ENCODE measurements at regions of chr17 and their contacts with region 1.

Region 1: GRCh38 chr17:57987580-57988421 is at the start of gene VEZF1:
- DNase-seq: peak; percentile 68
- H3K4me3 ChIP-seq: peak within 1 kb of the TSS; percentile 75 to 88 (median 86)
- H3K27ac ChIP-seq: peak within 1 kb of the TSS; percentile 80
- H3K4me1 ChIP-seq: peaks cover 27% of the 10 kb centered on the region
- H3K27me3 ChIP-seq: no peaks in the 10 kb centered on the region
- CTCF ChIP-seq: no peak
- total RNA-seq, gene VEZF1: 20.5 to 34.7 TPM

Region 2: GRCh38 chr17:57875309-57876115 is 112.3 kb before region 1 on chr17:
- CTCF ChIA-PET with region 1: no interaction called
- dilution Hi-C with region 1: no loop called
- in situ Hi-C with region 1: no loop called
- intact Hi-C with region 1: loop called (anchors 1 kb)
- DNase-seq: peak; percentile 91
- H3K4me3 ChIP-seq: no peak overlapping the region
- H3K27ac ChIP-seq: peak overlapping the region; percentile 61
- H3K4me1 ChIP-seq: peaks cover 70% of the 10 kb centered on the region
- H3K27me3 ChIP-seq: no peaks in the 10 kb centered on the region
- CTCF ChIP-seq: peak; percentile 57 to 58

Region 3: DNA sequence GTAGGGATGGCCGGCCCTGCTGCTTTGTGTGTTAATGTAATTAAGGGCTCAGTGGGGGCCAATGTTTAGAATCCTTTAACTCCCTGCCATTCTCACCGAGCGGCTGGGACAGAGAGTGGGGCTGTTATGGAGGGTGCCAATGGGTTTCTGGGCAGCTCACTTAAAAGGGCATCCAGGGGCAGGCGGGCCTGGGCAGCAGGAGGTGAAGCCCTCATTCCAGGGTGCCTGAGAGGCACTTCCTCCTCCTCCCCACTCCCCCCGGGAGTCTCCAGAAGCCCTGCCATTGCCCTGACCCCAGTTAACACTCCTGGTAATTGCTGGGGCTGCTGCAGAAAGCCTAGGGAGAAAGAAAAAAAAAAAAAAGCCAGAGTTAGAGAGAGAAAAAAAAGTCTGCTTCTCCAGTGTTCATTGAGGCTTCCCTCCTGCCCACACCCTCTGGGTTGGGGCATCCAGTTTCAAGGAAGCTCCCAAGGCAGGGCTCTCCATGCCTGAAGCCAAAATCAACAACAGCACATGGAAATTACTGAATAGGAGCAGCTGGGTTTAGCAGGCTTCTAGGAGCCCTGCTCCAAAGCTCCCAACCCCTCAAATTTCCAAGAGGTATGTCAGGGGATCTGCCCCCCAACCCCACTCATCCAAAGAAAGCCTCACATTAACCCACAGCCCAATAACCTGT is 60.6 kb before region 1 on chr17:
- CTCF ChIA-PET with region 1: no interaction called
- dilution Hi-C with region 1: loop called (anchors 5 kb)
- in situ Hi-C with region 1: no loop called
- intact Hi-C with region 1: no loop called
- DNase-seq: peak; percentile 59
- H3K4me3 ChIP-seq: no peak overlapping the region
- H3K27ac ChIP-seq: no peak overlapping the region
- H3K4me1 ChIP-seq: peaks cover 7% of the 10 kb centered on the region
- H3K27me3 ChIP-seq: no peaks in the 10 kb centered on the region
- CTCF ChIP-seq: no peak

Region 4: DNA sequence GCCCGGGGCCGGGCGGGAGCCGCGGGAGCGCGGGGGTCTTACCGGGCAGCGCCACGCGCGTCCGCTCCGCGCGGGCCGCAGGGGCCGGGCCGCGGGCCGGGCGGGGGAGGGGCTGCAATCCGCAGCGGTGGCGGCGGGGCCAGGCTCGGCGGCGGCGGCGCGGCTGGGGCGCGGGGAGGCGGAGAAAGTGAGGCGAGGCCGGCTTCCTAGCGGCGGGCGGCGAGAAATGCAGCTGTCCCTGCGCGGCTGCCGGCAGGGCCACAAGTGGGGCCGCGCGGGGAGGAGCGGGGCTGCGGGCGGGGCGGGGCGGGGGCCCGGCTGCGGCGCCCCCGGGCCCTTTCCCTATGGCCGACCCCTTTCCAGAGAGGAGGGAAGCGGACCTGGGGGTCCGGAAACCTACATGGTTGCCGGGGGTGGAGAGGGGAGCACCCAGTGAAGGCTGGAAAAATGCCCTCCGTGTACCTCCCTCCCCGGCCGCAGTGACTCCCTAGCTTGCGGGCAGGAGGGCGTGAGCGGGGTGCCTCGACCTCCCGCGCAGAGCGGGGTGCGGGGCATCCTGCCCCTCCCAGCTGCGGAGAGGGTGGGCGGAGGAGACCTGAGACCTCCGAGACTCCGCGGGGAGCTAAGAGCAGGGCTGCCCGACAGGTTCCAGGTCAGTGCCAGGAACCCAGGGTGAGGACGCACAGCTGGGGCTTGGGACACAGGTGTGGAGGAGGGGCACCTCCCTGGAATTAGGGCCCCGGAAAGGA is 32.4 kb before region 1 on chr17 and contains the start of gene CUEDC1:
- CTCF ChIA-PET with region 1: no interaction called
- dilution Hi-C with region 1: no loop called
- in situ Hi-C with region 1: no loop called
- intact Hi-C with region 1: loop called (anchors 2 kb)
- DNase-seq: peak; percentile 34
- H3K4me3 ChIP-seq: peak within 1 kb of the TSS; percentile 51 to 55 (median 52)
- H3K27ac ChIP-seq: no peak within 1 kb of the TSS
- H3K4me1 ChIP-seq: peaks cover 8% of the 10 kb centered on the region
- H3K27me3 ChIP-seq: no peaks in the 10 kb centered on the region
- CTCF ChIP-seq: no peak
- total RNA-seq, gene CUEDC1: 1.8 to 14.4 TPM

Region 5: DNA sequence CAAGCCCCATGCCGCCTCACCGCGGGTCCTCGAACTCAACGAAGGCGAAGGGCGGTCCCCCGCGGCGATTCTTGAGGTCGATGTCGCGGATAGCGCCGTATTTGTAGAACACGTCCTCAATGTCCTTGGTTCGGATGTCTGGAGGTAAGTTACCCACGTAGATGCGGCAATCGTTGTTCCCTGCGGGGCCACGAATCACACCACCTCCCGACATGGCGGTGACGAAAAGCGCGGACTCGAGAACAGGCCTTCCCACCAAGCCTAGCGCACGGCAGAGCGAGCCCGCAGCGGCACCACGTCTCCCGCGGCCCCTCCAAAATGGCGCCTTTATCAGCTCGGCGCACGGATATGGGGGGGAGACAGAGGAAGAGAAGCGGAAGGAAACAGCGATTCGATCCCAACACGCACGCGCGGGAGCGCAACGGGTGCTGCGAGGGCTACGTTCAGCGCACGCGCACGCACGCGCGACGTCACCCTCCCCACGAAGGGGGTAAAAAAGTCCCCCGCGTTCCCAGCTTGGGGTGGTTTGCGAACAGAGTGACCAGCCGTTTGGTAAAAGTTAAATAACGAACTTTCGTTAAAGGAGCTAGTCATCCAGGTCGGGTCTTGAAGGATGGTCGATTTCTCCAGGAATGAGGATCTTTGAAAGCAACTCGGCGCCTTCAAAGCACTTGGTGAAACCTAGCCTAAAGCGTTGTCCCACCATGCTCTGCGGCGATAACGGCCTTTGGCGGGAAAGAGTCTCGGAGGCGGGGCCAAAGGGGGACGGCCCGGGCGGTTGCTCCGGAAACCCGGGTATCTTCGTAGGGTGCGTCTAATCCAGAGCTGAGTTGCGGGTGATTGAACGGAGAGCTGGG is 19.4 kb after region 1 on chr17 and contains the start of gene SRSF1:
- CTCF ChIA-PET with region 1: no interaction called
- dilution Hi-C with region 1: no loop called
- in situ Hi-C with region 1: no loop called
- intact Hi-C with region 1: loop called (anchors 1 kb)
- DNase-seq: peak; percentile 97
- H3K4me3 ChIP-seq: peak within 1 kb of the TSS; percentile 78 to 97 (median 88)
- H3K27ac ChIP-seq: peak within 1 kb of the TSS; percentile 96
- H3K4me1 ChIP-seq: peaks cover 21% of the 10 kb centered on the region
- H3K27me3 ChIP-seq: no peaks in the 10 kb centered on the region
- CTCF ChIP-seq: no peak
- total RNA-seq, gene SRSF1: 197 to 238 TPM

Region 6: DNA sequence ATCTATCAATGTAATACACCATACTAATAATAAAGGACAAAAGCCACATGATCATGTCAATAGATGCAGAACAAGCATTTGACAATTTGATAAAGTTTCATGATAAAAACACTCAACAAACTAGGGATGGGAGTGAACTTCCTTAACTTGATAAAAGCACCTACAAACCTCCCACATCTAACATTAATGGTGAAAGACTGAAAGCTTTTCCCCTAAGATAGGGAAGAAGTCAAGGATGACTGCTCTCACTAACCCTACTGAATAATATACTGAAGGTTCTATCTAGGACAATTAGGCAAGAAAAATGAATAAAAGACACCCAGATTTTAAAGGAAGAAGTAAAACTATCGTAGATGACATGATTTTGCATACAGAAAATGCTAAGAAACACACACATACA is 85.1 kb after region 1 on chr17:
- CTCF ChIA-PET with region 1: no interaction called
- dilution Hi-C with region 1: no loop called
- in situ Hi-C with region 1: no loop called
- intact Hi-C with region 1: no loop called
- DNase-seq: no peak
- H3K4me3 ChIP-seq: no peak overlapping the region
- H3K27ac ChIP-seq: no peak overlapping the region
- H3K4me1 ChIP-seq: no peaks in the 10 kb centered on the region
- H3K27me3 ChIP-seq: peaks cover 9% of the 10 kb centered on the region
- CTCF ChIP-seq: no peak

Region 7: DNA sequence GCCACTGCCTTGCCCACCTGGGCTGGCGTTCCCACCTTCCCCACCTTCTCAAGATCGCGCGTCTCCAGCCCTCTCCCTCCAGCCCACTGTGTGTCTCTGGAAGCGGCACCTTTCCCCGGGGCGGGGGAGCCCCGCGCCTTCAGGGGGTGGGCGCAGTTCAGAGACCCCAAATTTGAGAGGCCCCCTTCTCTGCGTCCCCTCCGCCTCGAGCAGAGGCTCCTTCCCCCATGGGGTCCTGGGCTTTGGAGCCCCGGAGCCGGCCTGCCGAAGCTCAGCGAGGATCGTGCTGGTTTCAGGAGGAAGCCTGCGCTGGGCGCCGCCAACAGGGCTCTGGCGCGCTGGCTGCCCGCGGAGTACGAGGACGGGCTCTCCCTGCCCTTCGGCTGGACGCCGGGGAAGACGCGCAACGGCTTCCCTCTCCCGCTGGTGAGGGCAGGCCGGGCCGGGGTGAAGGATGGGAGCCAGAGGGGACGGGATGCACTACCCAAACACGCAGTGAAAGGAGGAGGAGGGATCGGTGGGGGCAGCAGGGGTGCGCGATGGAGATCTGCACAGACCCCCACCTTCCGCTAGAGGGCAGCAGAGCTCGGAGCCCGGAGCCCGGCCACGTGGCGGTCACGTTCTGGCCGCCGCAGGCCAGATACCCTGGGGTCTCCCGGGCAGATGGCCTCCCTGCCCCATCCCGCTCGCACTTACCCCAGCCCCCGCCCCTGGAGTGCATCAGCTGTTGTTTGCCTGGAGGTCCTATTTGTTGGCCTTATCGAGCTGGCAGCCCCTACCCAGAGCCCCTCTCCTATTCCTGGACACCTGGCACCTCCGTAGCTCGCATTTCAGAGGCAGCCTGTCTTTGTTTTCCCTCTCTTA is 261.7 kb after region 1 on chr17:
- CTCF ChIA-PET with region 1: no interaction called
- dilution Hi-C with region 1: no loop called
- in situ Hi-C with region 1: no loop called
- intact Hi-C with region 1: no loop called
- DNase-seq: peak; percentile 32
- H3K4me3 ChIP-seq: peak overlapping the region; percentile 10 to 62 (median 53)
- H3K27ac ChIP-seq: no peak overlapping the region
- H3K4me1 ChIP-seq: peaks cover 8% of the 10 kb centered on the region
- H3K27me3 ChIP-seq: peaks cover 6% of the 10 kb centered on the region
- CTCF ChIP-seq: peak; percentile 78 to 89